Left lung (tissue), 14 donors: ENCODE measurements at regions of chr6 and their contacts with region 1.

Region 1: DNA sequence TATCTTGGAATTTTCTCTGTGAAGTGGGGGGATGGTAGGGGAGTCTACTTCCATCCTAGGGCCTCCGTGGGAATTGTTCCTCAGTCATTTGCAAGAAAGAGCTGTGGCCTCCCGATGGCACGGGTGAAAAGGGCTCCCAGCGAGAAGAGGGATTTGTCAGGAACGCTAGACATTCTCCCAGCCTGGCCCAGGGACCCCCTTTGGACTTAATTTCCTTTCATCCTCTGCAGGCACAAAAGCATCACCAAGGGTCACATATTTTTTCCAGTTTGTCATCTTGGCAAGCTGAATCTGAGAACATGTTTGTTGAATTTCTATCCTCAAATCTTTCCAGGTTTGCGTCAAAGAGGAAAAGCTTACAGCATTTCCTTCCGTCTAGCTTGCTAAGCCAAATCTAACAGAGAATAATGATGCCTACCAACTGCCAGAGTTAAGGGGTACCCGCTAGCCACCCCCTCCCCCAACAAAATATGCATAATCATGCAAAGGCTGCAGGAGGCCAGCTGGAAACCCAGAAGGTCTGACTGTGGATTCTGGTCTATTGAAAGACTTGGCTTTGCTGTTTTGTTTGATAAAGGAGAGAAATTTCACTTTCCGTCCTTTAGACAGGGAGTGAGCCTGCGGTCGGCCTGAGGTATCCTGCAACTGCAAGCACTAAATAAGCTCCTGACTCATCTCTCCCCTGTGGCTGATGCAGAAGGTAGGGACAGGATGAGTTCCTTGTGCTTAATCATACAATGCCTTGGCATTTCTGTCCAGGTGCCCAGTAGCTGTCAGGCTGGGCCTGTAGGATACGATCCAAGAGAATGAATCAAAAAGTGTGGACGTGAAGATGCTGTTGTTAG is 23.1 kb downstream of the PSMG4 start:
- DNase-seq: peak in 2 of 4 donors; percentile 15 to 26
- ATAC-seq: peak; percentile 19
- H3K4me3 ChIP-seq: no peak overlapping the region
- H3K27ac ChIP-seq: peak overlapping the region; percentile 26 to 58
- H3K4me1 ChIP-seq: peaks cover 3 to 21% of the 10 kb centered on the region in 2 donors
- H3K27me3 ChIP-seq: no peaks in the 10 kb centered on the region
- CTCF ChIP-seq: no peak

Region 2: GRCh38 chr6:3456755-3457466 is 175.1 kb after region 1 on chr6 and contains the start of gene SLC22A23:
- intact Hi-C with region 1: loop called in 1 of 2 experiments (anchors 10 kb)
- DNase-seq: peak; percentile 44 to 89 (median 79)
- ATAC-seq: peak; percentile 85
- H3K4me3 ChIP-seq: peak within 1 kb of the TSS; percentile 55 to 57
- H3K27ac ChIP-seq: peak within 1 kb of the TSS in 1 of 2 donors; percentile 26
- H3K4me1 ChIP-seq: peaks cover 4 to 11% of the 10 kb centered on the region in 2 donors
- H3K27me3 ChIP-seq: peaks cover 0 to 73% of the 10 kb centered on the region in 2 donors
- CTCF ChIP-seq: peak; percentile 55 to 72
- polyA plus RNA-seq, gene SLC22A23: 19.7 to 31.2 (median 21.8) TPM

Region 3: DNA sequence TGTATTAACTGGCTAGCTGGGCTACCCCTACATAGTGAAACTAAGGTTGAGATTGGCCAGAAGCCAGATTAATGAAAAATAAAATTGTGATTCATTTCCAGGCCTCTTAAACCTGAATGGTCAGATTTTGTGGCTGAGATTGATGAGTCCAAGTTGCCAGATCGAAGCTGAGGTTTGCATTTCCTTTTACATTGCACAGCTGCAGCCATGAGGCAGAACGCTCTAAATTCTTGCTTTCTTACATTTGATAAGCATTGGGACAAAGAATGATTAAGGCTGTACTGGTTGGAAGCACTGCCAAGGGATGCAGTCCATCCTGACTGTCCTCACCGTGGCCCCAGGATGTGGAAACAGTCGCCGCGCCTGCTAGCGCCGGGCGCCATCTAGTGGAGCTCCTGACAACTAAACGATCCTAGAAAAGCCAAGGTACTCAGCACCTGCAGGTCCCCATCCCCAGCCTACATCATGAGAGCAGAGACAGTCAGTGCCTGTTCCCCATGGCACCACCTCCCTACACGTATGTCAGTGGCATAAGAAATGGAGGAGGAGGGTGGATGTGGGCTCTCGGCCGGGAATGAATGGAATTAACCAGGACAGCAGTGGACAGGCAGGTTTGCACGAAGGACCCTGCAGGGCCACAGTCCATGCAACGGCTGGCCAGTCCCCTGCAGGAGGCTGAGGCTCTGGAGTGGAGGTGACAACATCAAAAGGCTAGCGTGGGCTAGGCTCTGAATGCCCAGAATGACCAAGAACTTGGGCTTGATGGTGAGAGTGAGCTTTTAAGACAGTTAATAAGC is 450.7 kb after region 1 on chr6:
- intact Hi-C with region 1: loop called (anchors 5 to 10 kb)
- DNase-seq: peak in 3 of 4 donors; percentile 74 to 91 (median 84)
- ATAC-seq: peak; percentile 95
- H3K4me3 ChIP-seq: no peak overlapping the region
- H3K27ac ChIP-seq: no peak overlapping the region
- H3K4me1 ChIP-seq: peaks cover 0 to 20% of the 10 kb centered on the region in 2 donors
- H3K27me3 ChIP-seq: no peaks in the 10 kb centered on the region
- CTCF ChIP-seq: peak; percentile 72 to 78